Right ventricle myocardium superior (tissue), 1 donor: ENCODE measurements at regions of chr12 and their contacts with region 1.

Region 1: GRCh38 chr12:13734584-13735152 is 246.7 kb downstream of the GRIN2B start:
- DNase-seq: no peak
- ATAC-seq: no peak

Region 2: DNA sequence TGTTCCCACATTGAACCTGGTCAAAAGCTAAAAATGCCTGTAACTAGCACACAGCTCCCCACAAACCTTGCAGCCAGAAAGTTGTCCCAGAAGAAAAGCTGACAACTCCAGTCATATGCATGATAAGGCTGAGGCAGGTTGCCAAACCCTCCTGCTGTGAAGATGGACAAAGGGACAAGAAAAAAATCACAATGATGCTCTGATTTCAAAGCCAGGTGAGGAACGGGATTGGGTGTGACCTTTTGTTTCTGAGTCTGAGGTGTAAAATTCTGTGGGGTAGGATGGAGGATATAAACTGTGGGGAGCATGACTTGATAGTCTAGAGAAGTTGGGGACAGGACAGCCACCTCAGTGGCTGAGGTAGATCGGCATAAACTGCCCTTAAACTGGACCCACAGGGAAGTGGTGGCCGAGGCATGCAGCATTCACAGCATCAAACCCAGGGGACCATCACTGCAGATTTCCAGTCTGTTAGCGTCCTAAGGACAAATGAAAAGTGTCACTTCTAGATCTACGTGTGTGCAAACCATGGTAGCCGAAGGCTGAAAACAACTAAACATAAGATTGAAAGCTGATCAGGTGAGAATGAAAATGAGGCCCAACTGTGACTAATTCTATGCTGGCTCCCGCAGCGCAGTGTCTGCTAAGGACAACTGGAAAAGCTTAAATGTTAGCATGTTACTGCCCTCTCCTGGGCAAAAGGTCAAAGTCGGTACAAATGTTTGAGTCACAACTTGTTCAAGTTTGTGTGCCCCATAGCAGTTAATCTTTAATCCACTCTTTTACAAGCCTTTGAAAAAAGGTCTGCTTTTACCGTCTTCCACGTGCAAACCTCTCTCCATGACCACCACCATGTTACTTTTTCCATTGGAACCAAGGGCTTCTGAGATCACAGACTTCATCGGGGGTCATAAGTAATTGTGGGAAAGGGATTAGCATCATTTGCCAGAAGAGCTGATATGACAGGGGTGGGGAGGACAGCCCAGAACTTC is 206.9 kb after region 1 on chr12:
- intact Hi-C with region 1: loop called (anchors 5 kb)
- DNase-seq: no peak
- ATAC-seq: peak; percentile 79

Region 3: GRCh38 chr12:13959131-13959723 is 224.6 kb after region 1 on chr12:
- intact Hi-C with region 1: no loop called
- DNase-seq: no peak
- ATAC-seq: no peak

Region 4: GRCh38 chr12:14167005-14167628 is 432.4 kb after region 1 on chr12:
- intact Hi-C with region 1: loop called (anchors 5 kb)
- DNase-seq: no peak
- ATAC-seq: peak; percentile 49